Activated naive CD4-positive, alpha-beta T cell treated with anti-CD3 and anti-CD28 coated beads, Interleukin-2, amount 10 ng/mL, durations not matched to agents 7 days and 5 days (primary cell): ENCODE measurements at regions of chr2 and their contacts with region 1.

Region 1: GRCh38 chr2:85420536-85421259 is 2.2 kb downstream of the SH2D6 start:
- DNase-seq: peak; percentile 94
- H3K4me3 Mint-ChIP-seq: peak overlapping the region; percentile 57
- H3K27ac Mint-ChIP-seq: peak overlapping the region; percentile 80
- H3K4me1 Mint-ChIP-seq: peaks cover 35% of the 10 kb centered on the region
- H3K27me3 Mint-ChIP-seq: peaks cover 12% of the 10 kb centered on the region

Region 2: GRCh38 chr2:85327822-85328617 is 92.7 kb before region 1 on chr2 and contains the start of gene TGOLN2:
- CTCF ChIA-PET with region 1: no interaction called
- DNase-seq: peak; percentile 95
- H3K4me3 Mint-ChIP-seq: peak within 1 kb of the TSS; percentile 100
- H3K27ac Mint-ChIP-seq: peak within 1 kb of the TSS; percentile 99
- H3K4me1 Mint-ChIP-seq: peaks cover 36% of the 10 kb centered on the region
- H3K27me3 Mint-ChIP-seq: peaks cover 10% of the 10 kb centered on the region

Region 3: GRCh38 chr2:85390941-85391669 is 29.6 kb before region 1 on chr2:
- CTCF ChIA-PET with region 1: interaction called, 25 read pairs
- DNase-seq: peak; percentile 86
- H3K4me3 Mint-ChIP-seq: no peak overlapping the region
- H3K27ac Mint-ChIP-seq: peak overlapping the region; percentile 68
- H3K4me1 Mint-ChIP-seq: peaks cover 28% of the 10 kb centered on the region
- H3K27me3 Mint-ChIP-seq: no peaks in the 10 kb centered on the region

Region 4: DNA sequence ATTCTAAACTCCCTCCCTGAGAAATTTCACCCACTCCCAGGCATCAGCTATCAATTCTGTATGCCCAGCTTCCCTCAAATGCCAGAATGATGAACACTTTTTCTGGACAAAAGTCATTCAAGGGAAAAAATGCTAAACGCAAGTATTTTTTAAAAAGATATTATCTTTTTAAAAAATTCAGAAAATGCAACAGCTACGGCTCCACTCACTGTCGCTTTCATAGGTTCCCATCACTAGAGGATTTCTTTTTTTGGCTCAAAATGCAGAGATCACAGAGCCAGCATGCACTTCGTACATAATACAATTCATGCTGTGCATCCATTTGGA is 15.7 kb before region 1 on chr2:
- CTCF ChIA-PET with region 1: interaction called, 11 read pairs
- DNase-seq: no peak
- H3K4me3 Mint-ChIP-seq: peak overlapping the region; percentile 33
- H3K27ac Mint-ChIP-seq: peak overlapping the region; percentile 84
- H3K4me1 Mint-ChIP-seq: peaks cover 55% of the 10 kb centered on the region
- H3K27me3 Mint-ChIP-seq: no peaks in the 10 kb centered on the region

Region 5: GRCh38 chr2:85437488-85438284 is 17.0 kb after region 1 on chr2:
- CTCF ChIA-PET with region 1: interaction called, 10 read pairs
- DNase-seq: peak; percentile 83
- H3K4me3 Mint-ChIP-seq: peak overlapping the region; percentile 77
- H3K27ac Mint-ChIP-seq: peak overlapping the region; percentile 89
- H3K4me1 Mint-ChIP-seq: peaks cover 48% of the 10 kb centered on the region
- H3K27me3 Mint-ChIP-seq: peaks cover 6% of the 10 kb centered on the region

Region 6: GRCh38 chr2:85538486-85539360 is 118.0 kb after region 1 on chr2 and contains the start of gene MAT2A:
- CTCF ChIA-PET with region 1: interaction called, 62 read pairs
- DNase-seq: peak; percentile 87
- H3K4me3 Mint-ChIP-seq: peak within 1 kb of the TSS; percentile 92
- H3K27ac Mint-ChIP-seq: peak within 1 kb of the TSS; percentile 90
- H3K4me1 Mint-ChIP-seq: peaks cover 48% of the 10 kb centered on the region
- H3K27me3 Mint-ChIP-seq: no peaks in the 10 kb centered on the region

Region 7: DNA sequence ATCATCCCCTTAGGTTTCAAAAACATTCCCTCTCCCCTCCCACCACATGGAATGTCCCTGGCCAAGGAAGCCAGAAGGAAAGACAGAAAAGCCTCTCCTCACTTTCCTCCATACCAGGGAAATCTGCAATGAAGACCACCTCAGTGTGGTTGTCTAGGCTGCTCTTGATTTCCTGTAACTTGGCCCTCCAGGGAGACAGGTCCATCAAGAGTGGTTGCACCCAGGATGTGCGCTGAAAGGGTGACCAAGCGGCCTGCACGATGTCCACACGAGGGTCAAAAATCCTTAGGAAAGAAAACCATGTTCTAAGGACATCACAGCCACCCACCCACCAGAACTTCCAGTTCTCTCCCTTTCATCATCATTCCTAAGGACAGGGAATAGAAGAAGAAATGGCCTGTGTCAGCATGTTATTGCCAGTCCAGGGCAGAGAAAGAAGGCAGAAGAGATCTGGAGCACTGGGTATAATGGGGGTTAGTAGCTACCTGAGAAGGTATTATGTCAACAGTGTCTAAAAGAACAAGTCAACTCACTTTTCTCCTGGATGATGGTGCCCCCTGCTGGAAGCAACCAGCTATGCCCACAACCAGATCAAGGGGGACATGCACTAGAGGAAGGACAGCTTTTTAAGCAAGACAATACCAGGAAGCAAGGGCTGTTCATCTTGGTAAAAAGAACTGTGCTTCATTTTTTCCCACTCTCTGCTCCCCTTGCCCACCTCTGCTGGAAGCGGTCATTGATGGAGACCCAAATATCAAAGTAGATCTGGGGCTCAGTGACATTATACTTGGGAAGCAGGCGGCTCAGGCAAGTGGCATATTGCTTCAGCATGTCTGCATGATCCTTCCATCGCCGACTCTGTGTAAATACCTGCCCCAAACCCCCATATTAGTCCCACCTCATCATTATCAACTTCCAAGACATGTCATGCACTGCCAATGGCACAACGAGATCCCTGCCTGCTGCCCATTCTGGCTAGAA is 131.3 kb after region 1 on chr2:
- CTCF ChIA-PET with region 1: interaction called, 197 read pairs
- DNase-seq: peak; percentile 94
- H3K4me3 Mint-ChIP-seq: no peak overlapping the region
- H3K27ac Mint-ChIP-seq: peak overlapping the region; percentile 70
- H3K4me1 Mint-ChIP-seq: peaks cover 6% of the 10 kb centered on the region
- H3K27me3 Mint-ChIP-seq: no peaks in the 10 kb centered on the region